IMR-90 (cell line): ENCODE measurements at regions of chr13 and their contacts with region 1.

Region 1: GRCh38 chr13:42001580-42001979 is 40.7 kb upstream of the VWA8 start:
- DNase-seq: peak; percentile 93
- ATAC-seq: peak; percentile 99
- H3K4me3 ChIP-seq: no peak overlapping the region
- H3K27ac ChIP-seq: peak overlapping the region; percentile 34
- H3K4me1 ChIP-seq: 0 out of 2 replicates have a peak, but pooled peaks cover 4% of the 10 kb centered on the region
- H3K27me3 ChIP-seq: no peaks in the 10 kb centered on the region
- CTCF ChIP-seq: no peak
- POLR2A ChIP-seq: no peak
- RAD21 ChIP-seq: no peak

Region 2: DNA sequence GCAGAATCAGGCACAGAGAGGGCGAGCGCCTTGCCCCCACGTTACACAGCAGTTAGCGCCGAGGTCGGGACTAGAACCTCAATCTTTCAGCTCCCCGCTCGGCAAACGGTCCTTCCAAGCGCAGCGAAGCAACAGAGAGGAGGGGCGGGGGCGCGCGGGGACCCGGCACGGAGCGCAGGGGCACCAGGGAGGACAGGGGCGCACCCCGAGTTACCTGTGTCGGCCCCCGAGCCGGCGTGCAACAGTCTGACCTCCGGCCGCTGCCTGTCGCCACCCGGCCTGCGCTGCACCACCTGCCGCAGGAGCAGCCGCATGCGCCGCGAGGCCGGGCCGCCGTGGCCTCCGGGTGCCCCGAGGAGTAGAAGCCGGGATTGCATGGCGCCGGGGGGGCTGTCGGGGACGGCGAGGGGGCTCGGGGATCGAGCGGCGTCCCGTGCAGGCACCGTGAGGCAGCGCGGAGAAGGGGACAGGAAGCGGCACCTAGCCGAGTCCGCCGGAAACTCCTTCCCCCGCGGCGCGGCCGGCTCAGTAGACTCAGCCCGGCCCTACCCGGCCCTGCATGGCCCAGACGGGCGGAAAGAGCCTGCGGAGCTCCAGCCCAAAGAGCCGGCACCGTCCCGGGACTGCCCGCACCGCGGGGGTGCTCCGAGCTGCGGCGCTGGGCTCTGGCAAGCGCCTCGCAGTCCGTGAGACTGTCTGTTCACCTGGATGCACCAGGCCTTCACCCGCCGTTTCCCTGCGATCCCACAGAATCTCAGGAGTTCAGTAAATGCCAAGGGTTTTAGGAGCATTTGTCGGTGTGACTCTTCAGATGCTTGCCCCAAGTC is 40.7 kb before region 1 on chr13 and contains the start of gene VWA8:
- CTCF ChIA-PET with region 1: no interaction called
- POLR2A ChIA-PET with region 1: no interaction called
- dilution Hi-C with region 1: no loop called
- in situ Hi-C with region 1: no loop called
- intact Hi-C with region 1: loop called (anchors 1 kb)
- DNase-seq: peak; percentile 78
- ATAC-seq: peak; percentile 95
- H3K4me3 ChIP-seq: peak within 1 kb of the TSS; percentile 82
- H3K27ac ChIP-seq: peak within 1 kb of the TSS; percentile 96
- H3K4me1 ChIP-seq: peaks cover 3% of the 10 kb centered on the region; the same call in 1 of the 2 replicates
- H3K27me3 ChIP-seq: no peaks in the 10 kb centered on the region
- CTCF ChIP-seq: no peak
- POLR2A ChIP-seq: no peak
- RAD21 ChIP-seq: no peak; the same call in 1 of the 2 replicates
- total RNA-seq, gene VWA8: 18.3 and 19.7 TPM in 2 replicates